ENCODE measurements at regions of chr7 and their contacts with region 1.

Region 1: GRCh38 chr7:146826329-146826728 is 709.7 kb downstream of the CNTNAP2 start:
- DNase-seq: no peak
- ATAC-seq: no peak
- H3K4me3 ChIP-seq: no peak overlapping the region
- H3K27ac ChIP-seq: no peak overlapping the region
- H3K4me1 ChIP-seq: no peaks in the 10 kb centered on the region
- H3K27me3 ChIP-seq: no peaks in the 10 kb centered on the region
- CTCF ChIP-seq: no peak

Region 2: DNA sequence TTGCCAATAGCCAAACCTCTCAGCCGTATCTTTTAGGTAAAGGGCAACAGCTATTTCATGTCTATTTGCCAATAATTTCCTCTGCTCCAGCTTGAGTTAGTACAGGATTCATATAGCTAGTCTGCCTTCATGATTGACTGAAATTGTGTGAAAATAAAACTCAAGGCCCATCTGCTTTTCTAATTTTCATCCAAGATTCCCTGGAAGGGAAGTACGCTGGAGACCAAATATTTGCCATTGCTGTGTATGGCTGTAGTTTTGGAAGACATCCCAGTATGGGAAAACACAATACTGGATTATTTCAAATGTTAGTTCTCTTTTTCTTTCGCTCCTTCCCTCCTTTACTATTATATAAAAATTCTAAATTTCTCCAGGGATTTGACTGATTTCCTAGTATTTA is 57.4 kb before region 1 on chr7:
- intact Hi-C with region 1: loop called in 1 of 10 experiments (anchors 10 kb)
- DNase-seq: no peak
- ATAC-seq: no peak
- H3K4me3 ChIP-seq: no peak overlapping the region
- H3K27ac ChIP-seq: no peak overlapping the region
- H3K4me1 ChIP-seq: no peaks in the 10 kb centered on the region
- H3K27me3 ChIP-seq: no peaks in the 10 kb centered on the region
- CTCF ChIP-seq: no peak

Region 3: GRCh38 chr7:146876411-146876810 is 50.1 kb after region 1 on chr7:
- intact Hi-C with region 1: no loop called
- DNase-seq: no peak
- ATAC-seq: no peak
- H3K4me3 ChIP-seq: no peak overlapping the region
- H3K27ac ChIP-seq: no peak overlapping the region
- H3K4me1 ChIP-seq: no peaks in the 10 kb centered on the region
- H3K27me3 ChIP-seq: no peaks in the 10 kb centered on the region
- CTCF ChIP-seq: no peak